ENCODE measurements at regions of chr1 and their contacts with region 1.

Region 1: GRCh38 chr1:181088079-181089016 is at the start of gene IER5:
- DNase-seq: peak; percentile 98 to 99 (median 98)
- ATAC-seq: peak; percentile 89
- H3K4me3 ChIP-seq: peak within 1 kb of the TSS; percentile 84
- H3K27ac ChIP-seq: peak within 1 kb of the TSS; percentile 82
- H3K4me1 ChIP-seq: peaks cover 21 to 39% of the 10 kb centered on the region in 2 experiments
- H3K27me3 ChIP-seq: no peaks in the 10 kb centered on the region
- CTCF ChIP-seq: no peak; a peak in 1 of 6 replicates
- EP300 ChIP-seq: peak; percentile 67
- POLR2A ChIP-seq: peak; percentile 100
- RAD21 ChIP-seq: peak; percentile 28 to 29; a peak in 3 of 4 replicates
- polyA plus RNA-seq, gene IER5: 2.4 to 2.5 TPM

Region 2: DNA sequence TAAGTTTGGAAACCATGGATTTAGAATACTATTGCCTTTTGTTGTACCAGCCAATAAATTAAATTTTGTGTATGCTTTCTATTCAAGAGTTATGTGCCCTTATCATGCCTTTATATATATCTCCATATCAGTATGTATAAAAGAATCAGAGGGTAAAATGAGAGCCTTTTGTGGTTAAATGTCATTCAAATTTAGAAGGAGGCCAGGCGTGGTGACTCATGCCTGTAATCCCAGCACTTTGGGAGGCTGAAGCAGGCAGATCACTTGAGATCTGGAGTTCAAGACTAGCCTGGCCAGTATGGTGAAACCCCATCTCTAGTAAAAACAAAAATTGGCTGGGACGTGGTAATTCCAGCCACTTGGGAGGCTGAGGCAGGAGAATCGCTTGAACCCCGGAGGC is 367.6 kb before region 1 on chr1:
- CTCF ChIA-PET with region 1: no interaction called
- POLR2A ChIA-PET with region 1: no interaction called
- in situ Hi-C with region 1: no loop called
- intact Hi-C with region 1: no loop called
- DNase-seq: peak in 1 of 4 experiments; percentile 6
- ATAC-seq: no peak
- H3K4me3 ChIP-seq: no peak overlapping the region
- H3K27ac ChIP-seq: no peak overlapping the region
- H3K4me1 ChIP-seq: no peaks in the 10 kb centered on the region; a peak in 1 of 5 replicates
- H3K27me3 ChIP-seq: no peaks in the 10 kb centered on the region
- CTCF ChIP-seq: no peak
- EP300 ChIP-seq: no peak
- POLR2A ChIP-seq: no peak
- RAD21 ChIP-seq: no peak

Region 3: DNA sequence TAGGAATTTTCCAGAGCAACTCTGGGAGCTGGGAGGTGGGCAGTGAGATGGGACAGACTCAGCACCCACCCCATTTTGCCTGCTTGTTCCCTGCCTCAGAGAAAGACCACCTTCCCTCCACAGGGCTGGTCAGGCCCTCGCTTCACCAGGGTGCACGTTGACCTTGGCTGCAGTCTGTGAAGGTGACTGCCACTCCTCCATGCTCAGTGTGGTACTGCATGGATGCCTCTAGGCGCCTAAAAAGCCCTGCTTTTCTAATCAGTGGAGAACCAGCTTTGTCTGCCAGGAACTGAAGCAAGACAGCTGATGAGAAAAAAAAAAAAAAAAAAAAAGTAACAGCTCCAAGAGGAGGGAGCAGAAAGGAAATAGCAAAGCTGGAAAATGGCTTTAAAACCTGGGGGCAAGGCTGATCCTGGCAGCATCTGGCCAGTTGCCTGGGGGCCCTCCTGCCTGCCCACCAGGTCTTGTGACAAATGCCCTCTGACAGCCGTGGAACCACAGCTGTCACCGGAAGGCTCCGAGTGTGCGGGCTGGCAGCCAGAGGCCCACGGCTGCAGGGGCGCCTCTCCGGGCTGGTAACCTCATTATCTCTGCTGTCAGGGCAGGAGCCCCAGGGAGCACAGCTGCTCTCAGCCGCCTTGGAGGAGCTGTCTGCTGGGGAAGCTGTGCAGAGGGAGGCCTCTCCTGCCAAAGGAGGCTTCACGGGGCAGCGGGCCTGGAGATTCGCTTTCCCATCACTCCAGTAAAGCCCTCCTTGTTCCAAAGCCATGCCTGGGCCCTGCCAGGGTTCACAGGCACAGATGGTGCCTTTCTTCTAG is 162.0 kb before region 1 on chr1:
- CTCF ChIA-PET with region 1: no interaction called
- POLR2A ChIA-PET with region 1: interaction called, 3 read pairs
- in situ Hi-C with region 1: no loop called
- intact Hi-C with region 1: loop called (anchors 5 kb)
- DNase-seq: peak in 2 of 4 experiments; percentile 68 to 73
- ATAC-seq: peak; percentile 65
- H3K4me3 ChIP-seq: no peak overlapping the region
- H3K27ac ChIP-seq: no peak overlapping the region
- H3K4me1 ChIP-seq: peaks cover 29 to 38% of the 10 kb centered on the region in 2 experiments; a peak in 4 of 5 replicates
- H3K27me3 ChIP-seq: no peaks in the 10 kb centered on the region
- CTCF ChIP-seq: no peak
- EP300 ChIP-seq: no peak
- POLR2A ChIP-seq: no peak
- RAD21 ChIP-seq: no peak

Region 4: DNA sequence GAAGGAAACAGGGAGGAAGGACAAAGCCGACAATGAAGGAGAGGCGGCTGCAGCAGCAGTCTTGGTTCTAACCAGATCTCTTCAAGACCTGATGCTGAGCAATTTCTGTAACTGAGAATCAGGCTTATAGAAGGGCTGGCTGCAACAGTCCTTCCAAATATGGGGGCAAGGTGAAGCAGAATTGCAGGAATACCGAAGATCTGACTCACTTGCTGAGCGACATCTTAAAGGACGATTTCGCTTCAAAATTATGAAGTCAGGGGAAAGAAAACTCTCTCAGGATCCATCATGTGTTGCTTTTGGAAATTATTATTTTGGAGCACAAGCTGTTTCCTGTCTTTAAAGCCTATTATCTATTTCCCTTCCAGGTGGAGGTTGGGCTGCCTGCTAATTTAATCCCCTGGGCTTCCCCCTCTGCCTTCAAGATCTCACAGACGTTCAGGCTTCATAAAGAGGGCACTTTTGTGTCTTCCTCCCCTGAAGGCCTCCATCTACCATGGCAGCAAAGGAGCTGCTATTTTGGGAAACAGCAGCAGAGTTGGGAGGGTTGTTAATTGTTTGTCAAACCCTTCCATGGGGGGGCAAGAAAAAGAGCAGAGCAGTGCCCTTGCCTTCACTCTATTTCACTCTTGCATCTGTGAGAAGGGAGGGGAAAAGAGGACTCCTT is 10.6 kb before region 1 on chr1:
- CTCF ChIA-PET with region 1: no interaction called
- POLR2A ChIA-PET with region 1: interaction called, 46 read pairs
- in situ Hi-C with region 1: no loop called
- intact Hi-C with region 1: no loop called
- DNase-seq: no peak
- ATAC-seq: no peak
- H3K4me3 ChIP-seq: no peak overlapping the region
- H3K27ac ChIP-seq: no peak overlapping the region
- H3K4me1 ChIP-seq: no peaks in the 10 kb centered on the region
- H3K27me3 ChIP-seq: peaks cover 4 to 15% of the 10 kb centered on the region in 2 experiments; a peak in 4 of 5 replicates
- CTCF ChIP-seq: no peak
- EP300 ChIP-seq: no peak
- POLR2A ChIP-seq: no peak
- RAD21 ChIP-seq: no peak

Region 5: DNA sequence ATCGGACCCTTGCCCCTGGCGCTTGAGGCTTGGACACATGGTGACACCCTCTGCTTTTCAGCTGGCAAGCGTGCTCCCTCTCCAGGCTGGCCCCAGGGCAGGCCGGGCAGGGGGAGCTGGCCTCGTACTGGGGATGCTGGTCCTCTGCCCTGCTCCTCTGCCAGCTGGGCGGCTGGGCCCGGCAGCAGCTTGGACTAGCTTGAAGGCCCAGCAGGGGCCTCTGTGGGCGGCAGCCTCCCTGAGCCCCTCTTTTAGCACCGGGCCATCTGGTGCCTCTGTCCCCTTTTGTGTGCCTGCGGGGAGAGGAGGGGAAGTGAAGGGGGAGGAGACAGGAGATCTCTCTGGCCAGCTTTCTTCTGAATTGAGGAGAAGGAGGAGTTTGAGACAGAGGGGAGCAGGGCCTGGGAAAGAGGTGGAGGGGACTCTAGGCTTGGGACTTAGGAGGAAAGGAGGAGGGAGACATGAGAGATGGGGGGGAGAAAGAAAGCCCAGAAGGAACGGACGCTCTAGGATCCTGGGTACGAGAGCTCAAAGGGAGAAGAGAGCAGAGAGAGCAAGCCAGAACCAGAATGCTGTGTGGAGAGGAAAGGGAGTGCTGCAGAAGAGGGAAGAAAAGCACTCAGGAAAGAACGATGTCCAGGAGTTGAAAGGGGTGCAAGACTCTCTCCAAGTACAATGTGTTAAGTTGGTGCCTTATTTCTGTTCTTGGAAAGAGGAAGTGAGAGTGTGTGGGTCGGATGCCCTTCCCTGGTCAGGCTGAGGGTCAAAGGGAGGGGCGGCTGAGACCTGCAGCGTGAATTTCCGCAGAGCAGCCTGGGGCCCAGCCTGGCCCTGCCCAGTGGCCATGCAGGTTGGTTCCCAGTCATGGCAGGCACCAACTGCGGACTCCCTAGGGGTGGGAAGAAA is 40.5 kb after region 1 on chr1:
- CTCF ChIA-PET with region 1: interaction called, 3 read pairs
- POLR2A ChIA-PET with region 1: interaction called, 52 read pairs
- in situ Hi-C with region 1: no loop called
- intact Hi-C with region 1: no loop called
- DNase-seq: peak; percentile 51 to 66 (median 60)
- ATAC-seq: peak; percentile 63
- H3K4me3 ChIP-seq: no peak overlapping the region
- H3K27ac ChIP-seq: peak overlapping the region; percentile 62; the same call in 2 of the 3 replicates
- H3K4me1 ChIP-seq: peaks cover 56 to 58% of the 10 kb centered on the region in 2 experiments
- H3K27me3 ChIP-seq: no peaks in the 10 kb centered on the region
- CTCF ChIP-seq: no peak
- EP300 ChIP-seq: no peak
- POLR2A ChIP-seq: no peak
- RAD21 ChIP-seq: no peak; a peak in 1 of 4 replicates

Region 6: GRCh38 chr1:181152892-181153633 is 64.7 kb after region 1 on chr1:
- CTCF ChIA-PET with region 1: interaction called, 3 read pairs
- POLR2A ChIA-PET with region 1: interaction called, 14 read pairs
- in situ Hi-C with region 1: no loop called
- intact Hi-C with region 1: no loop called
- DNase-seq: peak; percentile 90 to 99 (median 94)
- ATAC-seq: peak; percentile 98
- H3K4me3 ChIP-seq: no peak overlapping the region
- H3K27ac ChIP-seq: peak overlapping the region; percentile 65
- H3K4me1 ChIP-seq: peaks cover 27 to 31% of the 10 kb centered on the region in 2 experiments
- H3K27me3 ChIP-seq: no peaks in the 10 kb centered on the region
- CTCF ChIP-seq: peak; percentile 71 to 86 (median 80)
- EP300 ChIP-seq: peak; percentile 99
- POLR2A ChIP-seq: no peak
- RAD21 ChIP-seq: peak; percentile 78 to 79

Measured in K562 (cell line).